ENCODE measurements at regions of chr4 and their contacts with region 1.

Region 1: DNA sequence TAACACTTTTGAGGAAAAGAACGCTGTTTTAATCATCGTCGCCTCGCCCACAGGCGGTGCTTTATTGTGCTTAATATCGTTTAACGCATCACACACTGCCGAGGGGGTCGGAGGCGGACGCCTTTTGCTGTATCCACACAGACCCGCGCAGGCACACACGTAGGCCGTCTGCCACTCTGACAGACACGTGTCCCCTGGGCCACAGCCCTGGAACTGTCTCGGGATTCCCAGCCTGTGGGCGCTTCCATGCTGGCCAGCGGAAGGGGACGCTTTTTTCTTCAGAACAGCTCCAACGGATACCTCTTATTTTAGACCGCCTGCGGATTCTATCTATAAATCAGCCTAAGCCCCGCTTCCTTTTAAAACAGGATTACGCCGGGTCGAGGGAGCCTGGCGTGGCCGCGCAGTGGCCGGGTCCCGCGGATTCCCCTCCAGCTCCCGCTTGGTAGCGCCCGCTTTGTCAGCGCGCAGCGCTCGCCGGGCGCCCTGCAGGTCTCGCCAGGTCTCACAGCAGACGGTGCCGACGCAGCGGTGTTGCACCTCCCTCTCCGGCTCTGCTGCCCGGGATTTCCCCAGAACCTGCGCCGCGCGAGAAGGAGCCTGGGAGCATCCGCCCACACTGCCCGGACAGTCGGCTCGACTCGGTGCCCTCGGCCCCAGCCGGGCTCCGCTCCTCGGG is at the start of gene NOCT:
- DNase-seq: peak; percentile 97
- H3K4me3 Mint-ChIP-seq: peak within 1 kb of the TSS; percentile 89
- H3K27ac Mint-ChIP-seq: peak within 1 kb of the TSS; percentile 94
- H3K4me1 Mint-ChIP-seq: peaks cover 45% of the 10 kb centered on the region
- H3K27me3 Mint-ChIP-seq: no peaks in the 10 kb centered on the region
- total RNA-seq, gene NOCT: 12.2 to 14.3 TPM

Region 2: DNA sequence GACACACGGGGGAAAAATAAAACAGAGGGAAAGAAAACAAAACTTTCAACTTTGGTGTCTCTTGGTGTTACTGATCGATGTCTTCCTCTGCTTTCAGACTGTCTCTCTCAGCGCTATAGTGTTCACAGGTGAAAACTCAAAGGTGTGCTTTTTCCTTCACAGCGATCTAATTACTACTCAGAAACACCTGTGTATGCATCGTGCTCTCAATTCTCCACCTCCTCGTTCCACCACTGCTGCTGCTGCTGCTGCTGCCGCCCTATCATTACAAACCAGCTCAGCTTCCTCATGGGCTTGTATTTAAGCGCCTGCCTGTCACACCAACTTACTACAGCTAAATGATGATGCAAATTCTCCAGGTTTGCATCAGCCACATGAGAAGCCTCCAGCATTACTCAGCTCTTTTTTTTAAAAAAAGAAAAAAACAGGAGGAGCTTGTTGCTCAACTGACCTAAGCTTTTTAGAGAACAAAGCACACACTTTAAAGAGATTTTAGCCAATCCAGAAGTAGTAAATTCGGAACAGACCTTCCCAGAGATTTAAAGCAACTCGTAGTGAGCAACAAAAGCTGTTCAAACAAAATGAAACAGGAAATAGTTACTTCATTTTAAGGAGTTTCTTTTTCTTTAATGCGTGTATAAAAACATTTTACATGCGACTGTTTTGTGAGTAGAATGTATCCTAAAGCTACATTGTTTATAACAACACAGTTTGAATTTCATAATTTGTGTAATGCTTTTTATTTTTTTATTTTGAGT is 773.2 kb before region 1 on chr4 and contains the start of gene SLC7A11:
- CTCF ChIA-PET with region 1: interaction called, 3 read pairs
- POLR2A ChIA-PET with region 1: no interaction called
- intact Hi-C with region 1: loop called (anchors 5 kb)
- DNase-seq: peak; percentile 69
- H3K4me3 Mint-ChIP-seq: peak within 1 kb of the TSS; percentile 84
- H3K27ac Mint-ChIP-seq: peak within 1 kb of the TSS; percentile 70
- H3K4me1 Mint-ChIP-seq: peaks cover 12% of the 10 kb centered on the region
- H3K27me3 Mint-ChIP-seq: no peaks in the 10 kb centered on the region
- total RNA-seq, gene SLC7A11: 3.2 to 3.4 TPM

Region 3: DNA sequence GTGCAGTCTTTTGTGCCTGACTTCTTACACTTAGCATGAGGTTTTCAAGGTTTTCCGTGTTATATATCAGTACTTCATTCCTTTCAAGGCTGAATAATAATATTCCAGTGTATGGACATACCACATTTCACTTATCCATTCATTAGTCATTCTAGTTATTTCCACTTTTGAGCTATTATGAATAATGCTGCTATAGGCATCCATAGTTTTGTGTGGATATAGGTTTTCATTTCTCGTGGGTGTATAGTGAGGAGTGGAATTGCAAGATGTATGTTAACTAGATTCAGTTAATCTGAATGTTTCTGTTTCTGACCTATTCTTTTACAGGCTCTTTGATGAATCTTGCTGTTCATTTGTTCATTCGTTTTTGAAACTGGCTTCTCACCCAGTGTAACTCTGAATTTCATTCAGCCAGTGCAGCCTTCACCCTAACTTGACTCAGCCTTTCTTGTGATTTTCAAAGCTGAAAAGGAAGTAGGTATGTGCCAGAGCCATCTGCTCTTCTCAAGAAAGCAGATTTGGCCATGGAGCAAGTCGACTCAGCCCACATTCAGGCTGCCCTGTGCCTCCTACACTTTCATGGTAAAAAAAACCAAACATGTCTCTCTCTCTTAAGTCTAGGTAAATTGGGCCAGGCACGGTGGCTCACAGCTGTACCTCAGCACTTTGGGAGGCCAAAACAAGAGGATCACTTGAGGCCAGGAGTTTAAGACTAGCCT is 56.2 kb before region 1 on chr4:
- CTCF ChIA-PET with region 1: no interaction called
- POLR2A ChIA-PET with region 1: no interaction called
- intact Hi-C with region 1: no loop called
- DNase-seq: no peak
- H3K4me3 Mint-ChIP-seq: no peak overlapping the region
- H3K27ac Mint-ChIP-seq: no peak overlapping the region
- H3K4me1 Mint-ChIP-seq: peaks cover 2% of the 10 kb centered on the region
- H3K27me3 Mint-ChIP-seq: peaks cover 6% of the 10 kb centered on the region

Region 4: GRCh38 chr4:139554893-139555704 is 539.7 kb after region 1 on chr4:
- CTCF ChIA-PET with region 1: no interaction called
- POLR2A ChIA-PET with region 1: interaction called, 9 read pairs
- intact Hi-C with region 1: loop called (anchors 2 kb)
- DNase-seq: peak; percentile 91
- H3K4me3 Mint-ChIP-seq: peak overlapping the region; percentile 95
- H3K27ac Mint-ChIP-seq: peak overlapping the region; percentile 96
- H3K4me1 Mint-ChIP-seq: peaks cover 62% of the 10 kb centered on the region
- H3K27me3 Mint-ChIP-seq: no peaks in the 10 kb centered on the region